ENCODE measurements at regions of chr1 and their contacts with region 1.

Region 1: DNA sequence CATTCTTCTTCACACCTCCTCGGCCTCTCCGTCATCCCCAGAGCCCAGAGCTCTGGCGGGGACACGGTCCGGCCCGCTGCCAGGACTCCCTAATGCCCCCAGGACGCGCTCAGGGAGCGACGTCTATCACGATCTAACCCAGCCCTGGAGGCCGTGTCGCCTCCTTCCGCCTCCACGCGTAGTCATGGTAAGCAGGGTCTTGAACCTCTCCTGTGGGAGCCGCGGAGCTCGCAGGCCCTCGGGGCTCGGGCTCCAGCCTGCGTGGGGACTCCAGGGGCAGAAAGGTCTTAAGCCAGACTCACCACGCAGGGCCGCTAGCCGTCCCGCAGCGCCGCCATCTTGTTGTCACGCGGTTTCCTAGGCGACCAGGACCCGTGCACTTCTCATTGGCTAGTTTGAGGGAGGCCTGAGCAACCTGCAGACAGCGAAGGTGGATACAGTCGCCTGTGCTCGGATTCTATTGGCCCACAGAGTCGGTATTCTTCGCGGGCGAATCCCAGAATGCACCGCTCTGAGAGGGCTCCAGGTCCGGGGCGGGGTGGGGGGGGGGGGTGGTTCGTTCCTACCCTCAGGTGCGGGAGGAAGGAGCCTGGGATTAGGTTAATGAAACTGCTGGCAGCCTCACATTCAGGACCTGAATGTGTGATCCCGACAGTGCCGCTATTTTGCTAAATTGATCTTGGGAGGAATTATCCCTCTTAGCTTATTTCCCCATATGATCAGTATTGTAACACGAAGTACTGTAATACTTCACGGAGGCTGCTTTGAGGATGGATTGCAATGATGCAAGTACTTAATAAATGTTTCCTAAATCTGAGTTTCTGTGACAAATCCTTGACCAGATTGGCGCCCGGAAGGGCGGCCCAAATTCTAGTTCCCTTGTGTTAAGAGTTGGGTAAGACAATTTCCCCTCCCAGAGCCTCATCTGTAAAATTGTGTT is at the start of gene UBXN11:
- DNase-seq: peak; percentile 98
- H3K4me3 Mint-ChIP-seq: peak within 1 kb of the TSS; percentile 99
- H3K27ac Mint-ChIP-seq: peak within 1 kb of the TSS; percentile 97
- H3K4me1 Mint-ChIP-seq: peaks cover 38% of the 10 kb centered on the region
- H3K27me3 Mint-ChIP-seq: no peaks in the 10 kb centered on the region
- total RNA-seq, gene UBXN11: 26.4 to 26.9 TPM

Region 2: GRCh38 chr1:25239681-25240541 is 1066.6 kb before region 1 on chr1:
- CTCF ChIA-PET with region 1: no interaction called
- intact Hi-C with region 1: loop called (anchors 10 kb)
- DNase-seq: peak; percentile 96
- H3K4me3 Mint-ChIP-seq: peak overlapping the region; percentile 91
- H3K27ac Mint-ChIP-seq: peak overlapping the region; percentile 99
- H3K4me1 Mint-ChIP-seq: peaks cover 48% of the 10 kb centered on the region
- H3K27me3 Mint-ChIP-seq: no peaks in the 10 kb centered on the region

Region 3: GRCh38 chr1:26177182-26177684 is 129.3 kb before region 1 on chr1 and contains the start of gene CNKSR1:
- CTCF ChIA-PET with region 1: no interaction called
- intact Hi-C with region 1: no loop called
- DNase-seq: no peak
- H3K4me3 Mint-ChIP-seq: peak within 1 kb of the TSS; percentile 58
- H3K27ac Mint-ChIP-seq: no peak within 1 kb of the TSS
- H3K4me1 Mint-ChIP-seq: peaks cover 3% of the 10 kb centered on the region
- H3K27me3 Mint-ChIP-seq: no peaks in the 10 kb centered on the region
- total RNA-seq, gene CNKSR1: 1.5 to 1.8 TPM

Measured in activated naive CD4-positive, alpha-beta T cell treated with anti-CD3 and anti-CD28 coated beads for 36 hours (primary cell).